A549 (cell line): ENCODE measurements at regions of chr15 and their contacts with region 1.

Region 1: GRCh38 chr15:55526559-55527036 is 18.6 kb upstream of the DNAAF4 start:
- DNase-seq: peak; percentile 26 to 69
- ATAC-seq: peak in 1 of 2 experiments; percentile 85; a peak in 3 of 6 replicates
- H3K4me3 ChIP-seq: no peak overlapping the region
- H3K27ac ChIP-seq: peak overlapping the region in 1 of 2 experiments; percentile 45; a peak in 2 of 6 replicates
- H3K4me1 ChIP-seq: peaks cover 6% of the 10 kb centered on the region; the same call in 2 of the 3 replicates
- CTCF ChIP-seq: peak; percentile 41; the same call in 2 of the 3 replicates
- EP300 ChIP-seq: no peak
- POLR2A ChIP-seq: no peak
- RAD21 ChIP-seq: peak in 1 of 2 experiments; percentile 52; a peak in 2 of 5 replicates

Region 2: GRCh38 chr15:55514414-55514850 is 12.2 kb before region 1 on chr15:
- CTCF ChIA-PET with region 1: interaction called, 12 read pairs
- POLR2A ChIA-PET with region 1: no interaction called
- DNase-seq: no peak
- ATAC-seq: no peak
- H3K4me3 ChIP-seq: no peak overlapping the region
- H3K27ac ChIP-seq: no peak overlapping the region
- H3K4me1 ChIP-seq: no peaks in the 10 kb centered on the region
- CTCF ChIP-seq: no peak
- EP300 ChIP-seq: no peak
- POLR2A ChIP-seq: no peak
- RAD21 ChIP-seq: no peak

Region 3: DNA sequence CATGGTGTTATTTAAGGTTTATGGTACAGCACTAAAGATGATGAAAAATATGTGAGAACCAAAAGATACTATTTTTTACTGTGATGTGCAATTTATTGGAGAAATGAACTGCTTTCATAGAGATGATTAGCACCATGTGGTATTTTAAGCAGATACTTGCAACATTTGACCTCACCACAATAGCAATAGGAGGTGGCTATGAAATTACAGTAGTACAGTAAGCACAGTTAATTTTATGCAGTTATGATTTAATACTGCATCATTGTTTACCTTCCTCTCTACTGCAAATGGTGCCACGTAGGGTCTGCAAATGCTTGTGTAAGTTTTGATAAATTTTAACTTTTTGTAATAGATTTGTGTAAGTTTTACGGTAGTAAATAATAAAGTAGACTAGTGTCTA is 47.5 kb after region 1 on chr15:
- CTCF ChIA-PET with region 1: no interaction called
- POLR2A ChIA-PET with region 1: no interaction called
- DNase-seq: no peak
- ATAC-seq: no peak
- H3K4me3 ChIP-seq: no peak overlapping the region
- H3K27ac ChIP-seq: no peak overlapping the region
- H3K4me1 ChIP-seq: peaks cover 11% of the 10 kb centered on the region; the same call in 2 of the 3 replicates
- CTCF ChIP-seq: no peak
- EP300 ChIP-seq: no peak
- POLR2A ChIP-seq: no peak
- RAD21 ChIP-seq: no peak